BJ (cell line): ENCODE measurements at regions of chr2 and their contacts with region 1.

Region 1: DNA sequence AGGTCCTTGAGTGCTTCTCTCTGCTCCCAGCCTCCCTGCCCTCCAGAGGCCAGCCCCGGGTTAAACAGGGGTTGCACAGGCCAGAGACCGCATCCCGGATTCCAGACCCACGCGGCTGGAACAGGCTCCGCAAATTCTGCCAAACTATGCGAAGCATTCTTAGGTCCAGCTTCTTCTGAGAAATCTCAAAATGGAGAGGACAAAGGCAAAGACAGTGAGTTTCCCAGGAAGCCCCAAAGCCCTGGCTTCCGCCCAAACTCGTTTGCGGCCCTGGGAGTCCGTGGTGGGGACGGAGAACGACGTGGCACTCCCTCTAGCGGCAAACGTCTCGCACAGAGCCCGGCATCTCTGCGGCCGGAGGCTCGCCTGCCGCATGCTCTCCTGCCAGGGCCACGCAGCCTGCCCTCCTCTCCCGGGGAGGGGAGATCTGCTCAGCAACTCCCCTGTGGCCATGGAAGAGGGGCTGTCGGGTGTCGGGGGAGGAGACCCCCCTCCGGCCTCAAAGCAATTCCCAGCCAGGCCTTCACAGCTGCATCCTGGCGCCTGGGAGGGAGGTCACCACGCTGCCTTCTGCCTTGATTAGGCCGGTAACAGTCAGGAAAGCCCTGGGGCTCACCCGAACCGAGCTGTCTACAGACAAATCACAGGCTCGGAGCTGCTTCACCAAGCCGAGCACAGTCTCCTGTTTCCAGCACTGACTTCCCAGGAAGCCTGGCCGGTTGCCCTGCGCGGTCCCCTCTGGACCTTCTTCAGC is 33.4 kb upstream of the KLHL29 start:
- DNase-seq: peak; percentile 19
- H3K4me3 ChIP-seq: no peak overlapping the region
- H3K27me3 ChIP-seq: peaks cover 3% of the 10 kb centered on the region; the same call in 1 of the 2 replicates
- CTCF ChIP-seq: peak; percentile 93

Region 2: GRCh38 chr2:23188658-23189057 is 162.9 kb before region 1 on chr2:
- CTCF ChIA-PET with region 1: no interaction called
- POLR2A ChIA-PET with region 1: no interaction called
- DNase-seq: no peak
- H3K4me3 ChIP-seq: no peak overlapping the region
- H3K27me3 ChIP-seq: no peaks in the 10 kb centered on the region
- CTCF ChIP-seq: no peak

Region 3: GRCh38 chr2:23330214-23330613 is 21.4 kb before region 1 on chr2:
- CTCF ChIA-PET with region 1: interaction called, 10 read pairs
- POLR2A ChIA-PET with region 1: no interaction called
- DNase-seq: no peak
- H3K4me3 ChIP-seq: no peak overlapping the region
- H3K27me3 ChIP-seq: no peaks in the 10 kb centered on the region
- CTCF ChIP-seq: no peak

Region 4: GRCh38 chr2:23375448-23375847 is 23.9 kb after region 1 on chr2:
- CTCF ChIA-PET with region 1: interaction called, 10 read pairs
- POLR2A ChIA-PET with region 1: no interaction called
- DNase-seq: no peak
- H3K4me3 ChIP-seq: no peak overlapping the region
- H3K27me3 ChIP-seq: no peaks in the 10 kb centered on the region; the same call in 1 of the 2 replicates
- CTCF ChIP-seq: no peak

Region 5: GRCh38 chr2:23541503-23542334 is 190.2 kb after region 1 on chr2:
- CTCF ChIA-PET with region 1: no interaction called
- POLR2A ChIA-PET with region 1: no interaction called
- DNase-seq: no peak
- H3K4me3 ChIP-seq: no peak overlapping the region
- H3K27me3 ChIP-seq: no peaks in the 10 kb centered on the region
- CTCF ChIP-seq: no peak